A673 (cell line): ENCODE measurements at regions of chr4 and their contacts with region 1.

Region 1: GRCh38 chr4:189792924-189793618 is 147.6 kb upstream of the FRG1 start:
- DNase-seq: peak; percentile 75
- H3K4me3 ChIP-seq: no peak overlapping the region
- H3K27ac ChIP-seq: no peak overlapping the region
- H3K4me1 ChIP-seq: no peaks in the 10 kb centered on the region
- H3K27me3 ChIP-seq: peaks cover 13% of the 10 kb centered on the region
- CTCF ChIP-seq: peak; percentile 94

Region 2: GRCh38 chr4:189202182-189202868 is 590.7 kb before region 1 on chr4:
- CTCF ChIA-PET with region 1: no interaction called
- POLR2A ChIA-PET with region 1: no interaction called
- intact Hi-C with region 1: loop called (anchors 10 kb)
- DNase-seq: peak; percentile 77
- H3K4me3 ChIP-seq: peak overlapping the region; percentile 38
- H3K27ac ChIP-seq: no peak overlapping the region
- H3K4me1 ChIP-seq: no peaks in the 10 kb centered on the region
- H3K27me3 ChIP-seq: peaks cover 51% of the 10 kb centered on the region
- CTCF ChIP-seq: peak; percentile 97

Region 3: GRCh38 chr4:189436207-189436606 is 356.9 kb before region 1 on chr4:
- CTCF ChIA-PET with region 1: no interaction called
- POLR2A ChIA-PET with region 1: no interaction called
- intact Hi-C with region 1: loop called (anchors 5 kb)
- DNase-seq: peak; percentile 4
- H3K4me3 ChIP-seq: no peak overlapping the region
- H3K27ac ChIP-seq: no peak overlapping the region
- H3K4me1 ChIP-seq: no peaks in the 10 kb centered on the region
- H3K27me3 ChIP-seq: no peaks in the 10 kb centered on the region
- CTCF ChIP-seq: peak; percentile 50; the same call in 1 of the 2 replicates